ENCODE measurements at regions of chr16 and their contacts with region 1.

Region 1: GRCh38 chr16:1929578-1930337 is 11.5 kb upstream of the HS3ST6 start:
- DNase-seq: peak; percentile 70 to 91 (median 80)
- H3K4me3 ChIP-seq: peak overlapping the region; percentile 36 to 75 (median 67)
- H3K27ac ChIP-seq: peak overlapping the region in 25 of 59 donors; percentile 8 to 87 (median 60)
- H3K27me3 ChIP-seq: peaks cover 0 to 21% (median 2%) of the 10 kb centered on the region in 45 donors
- CTCF ChIP-seq: peak; percentile 70 to 100 (median 98)

Region 2: GRCh38 chr16:1863681-1864460 is 65.9 kb before region 1 on chr16:
- intact Hi-C with region 1: loop called (anchors 5 kb)
- DNase-seq: no peak
- H3K4me3 ChIP-seq: peak overlapping the region in 1 of 59 donors; percentile 23
- H3K27ac ChIP-seq: no peak overlapping the region
- H3K27me3 ChIP-seq: peaks cover 0 to 18% (median 0%) of the 10 kb centered on the region in 45 donors
- CTCF ChIP-seq: peak; percentile 51 to 79 (median 64)

Region 3: GRCh38 chr16:1971796-1972489 is 42.2 kb after region 1 on chr16 and contains the start of gene TBL3:
- intact Hi-C with region 1: no loop called
- DNase-seq: peak; percentile 86 to 96 (median 92)
- H3K4me3 ChIP-seq: peak within 1 kb of the TSS; percentile 69 to 100 (median 98)
- H3K27ac ChIP-seq: peak within 1 kb of the TSS in 58 of 59 donors; percentile 39 to 96 (median 88)
- H3K27me3 ChIP-seq: no peaks in the 10 kb centered on the region
- CTCF ChIP-seq: peak in 38 of 56 donors; percentile 5 to 58 (median 35)
- total RNA-seq, gene TBL3: 13.8 to 38.7 (median 23.1) TPM